ENCODE measurements at regions of chr9 and their contacts with region 1.

Region 1: GRCh38 chr9:122001491-122002201 is 91.5 kb downstream of the TTLL11 start:
- DNase-seq: peak; percentile 76 to 90
- ATAC-seq: peak; percentile 90 to 92
- H3K4me3 ChIP-seq: peak overlapping the region in 3 of 4 donors; percentile 13 to 16 (median 15)
- H3K27ac ChIP-seq: peak overlapping the region; percentile 85 to 94 (median 88)
- H3K4me1 ChIP-seq: peaks cover 29 to 30% of the 10 kb centered on the region in 2 donors
- H3K27me3 ChIP-seq: no peaks in the 10 kb centered on the region
- CTCF ChIP-seq: no peak
- POLR2A ChIP-seq: no peak

Region 2: GRCh38 chr9:121984726-121985402 is 16.8 kb before region 1 on chr9:
- in situ Hi-C with region 1: no loop called
- intact Hi-C with region 1: loop called (anchors 1 kb)
- DNase-seq: peak; percentile 81 to 83
- ATAC-seq: peak; percentile 91 to 93
- H3K4me3 ChIP-seq: no peak overlapping the region
- H3K27ac ChIP-seq: peak overlapping the region; percentile 88 to 95 (median 94)
- H3K4me1 ChIP-seq: peaks cover 39 to 49% of the 10 kb centered on the region in 2 donors
- H3K27me3 ChIP-seq: no peaks in the 10 kb centered on the region
- CTCF ChIP-seq: peak in 1 of 5 experiments; percentile 23
- POLR2A ChIP-seq: peak; percentile 21 to 22

Region 3: DNA sequence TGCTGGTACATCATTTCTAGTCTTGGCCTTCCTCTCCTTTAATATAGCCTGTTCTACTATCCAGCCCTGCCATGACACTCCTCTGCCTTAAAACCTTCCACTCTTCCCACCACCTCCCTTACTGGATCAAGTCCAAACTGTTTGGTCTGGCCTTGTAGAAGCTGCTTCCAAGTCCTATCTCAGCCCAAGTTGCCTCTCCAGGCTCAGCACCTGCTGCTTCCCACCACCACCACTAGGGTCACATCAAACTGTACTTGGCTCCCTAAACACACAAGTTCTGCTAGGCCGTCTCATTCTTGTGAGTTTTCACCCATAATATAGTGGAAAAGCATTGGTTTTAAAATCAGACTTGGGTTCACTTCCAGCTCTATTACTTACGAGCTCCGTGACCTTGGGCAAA is 156.6 kb after region 1 on chr9:
- in situ Hi-C with region 1: no loop called
- intact Hi-C with region 1: no loop called
- DNase-seq: peak in 1 of 2 donors; percentile 49
- ATAC-seq: peak in 1 of 2 donors; percentile 26
- H3K4me3 ChIP-seq: peak overlapping the region in 3 of 4 donors; percentile 89 to 97 (median 90)
- H3K27ac ChIP-seq: peak overlapping the region in 3 of 4 donors; percentile 90 to 97 (median 96)
- H3K4me1 ChIP-seq: peaks cover 42 to 43% of the 10 kb centered on the region in 2 donors
- H3K27me3 ChIP-seq: no peaks in the 10 kb centered on the region
- CTCF ChIP-seq: peak in 1 of 5 experiments; percentile 9
- POLR2A ChIP-seq: no peak

Measured in gastrocnemius medialis (tissue), 4 donors.